Prostate gland (tissue), 2 donors: ENCODE measurements at regions of chr5 and their contacts with region 1.

Region 1: GRCh38 chr5:81194633-81195333 is 38.3 kb upstream of the CKMT2 start:
- DNase-seq: peak; percentile 68
- H3K4me3 ChIP-seq: no peak overlapping the region
- H3K27ac ChIP-seq: no peak overlapping the region
- H3K4me1 ChIP-seq: no peaks in the 10 kb centered on the region
- H3K27me3 ChIP-seq: no peaks in the 10 kb centered on the region
- CTCF ChIP-seq: peak; percentile 63 to 85 (median 76)
- POLR2A ChIP-seq: no peak

Region 2: DNA sequence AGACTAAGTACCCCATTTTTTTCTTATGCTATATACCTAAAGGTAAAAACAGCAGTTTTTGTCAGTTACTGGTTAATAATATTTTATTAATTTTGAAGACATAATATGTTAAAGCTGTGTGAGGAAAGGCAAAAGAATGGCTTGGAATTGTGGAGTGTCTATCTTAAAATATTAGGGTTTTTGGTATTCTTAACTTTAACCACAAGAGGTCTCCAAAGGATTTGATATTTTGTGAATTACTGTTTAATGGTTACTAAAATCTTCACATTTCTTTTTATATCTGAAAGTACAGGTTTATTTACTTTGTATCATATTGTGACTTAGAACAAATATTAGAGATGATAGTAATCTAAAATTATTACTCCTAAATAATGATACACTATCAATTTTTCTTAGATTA is 508.0 kb before region 1 on chr5:
- intact Hi-C with region 1: loop called (anchors 10 kb)
- DNase-seq: no peak
- H3K4me3 ChIP-seq: no peak overlapping the region
- H3K27ac ChIP-seq: no peak overlapping the region
- H3K4me1 ChIP-seq: no peaks in the 10 kb centered on the region
- H3K27me3 ChIP-seq: no peaks in the 10 kb centered on the region
- CTCF ChIP-seq: peak in 3 of 4 experiments; percentile 28 to 59 (median 52)
- POLR2A ChIP-seq: no peak

Region 3: DNA sequence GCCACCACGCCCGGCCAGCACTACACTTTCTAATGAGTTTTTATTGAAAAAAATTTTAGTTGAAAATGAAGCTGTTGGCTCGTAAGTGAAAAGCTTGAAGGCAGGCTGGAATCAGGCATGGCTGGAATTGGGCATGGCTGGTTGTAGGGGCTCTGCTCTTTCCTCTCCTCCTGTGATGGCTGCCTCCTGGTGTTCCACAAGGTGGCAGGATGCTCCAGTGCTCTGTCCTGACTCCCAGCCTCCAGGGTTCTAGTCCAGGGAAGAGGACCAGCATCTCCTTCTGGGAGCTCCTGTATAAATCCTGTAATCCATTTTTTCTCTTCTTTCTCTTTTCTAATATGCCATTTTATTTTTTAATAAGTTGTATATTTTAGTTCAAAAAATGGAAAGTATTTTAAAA is 482.8 kb before region 1 on chr5:
- intact Hi-C with region 1: loop called (anchors 10 kb)
- DNase-seq: no peak
- H3K4me3 ChIP-seq: no peak overlapping the region
- H3K27ac ChIP-seq: no peak overlapping the region
- H3K4me1 ChIP-seq: peaks cover 2% of the 10 kb centered on the region
- H3K27me3 ChIP-seq: no peaks in the 10 kb centered on the region
- CTCF ChIP-seq: peak in 2 of 4 experiments; percentile 22 to 27
- POLR2A ChIP-seq: no peak

Region 4: DNA sequence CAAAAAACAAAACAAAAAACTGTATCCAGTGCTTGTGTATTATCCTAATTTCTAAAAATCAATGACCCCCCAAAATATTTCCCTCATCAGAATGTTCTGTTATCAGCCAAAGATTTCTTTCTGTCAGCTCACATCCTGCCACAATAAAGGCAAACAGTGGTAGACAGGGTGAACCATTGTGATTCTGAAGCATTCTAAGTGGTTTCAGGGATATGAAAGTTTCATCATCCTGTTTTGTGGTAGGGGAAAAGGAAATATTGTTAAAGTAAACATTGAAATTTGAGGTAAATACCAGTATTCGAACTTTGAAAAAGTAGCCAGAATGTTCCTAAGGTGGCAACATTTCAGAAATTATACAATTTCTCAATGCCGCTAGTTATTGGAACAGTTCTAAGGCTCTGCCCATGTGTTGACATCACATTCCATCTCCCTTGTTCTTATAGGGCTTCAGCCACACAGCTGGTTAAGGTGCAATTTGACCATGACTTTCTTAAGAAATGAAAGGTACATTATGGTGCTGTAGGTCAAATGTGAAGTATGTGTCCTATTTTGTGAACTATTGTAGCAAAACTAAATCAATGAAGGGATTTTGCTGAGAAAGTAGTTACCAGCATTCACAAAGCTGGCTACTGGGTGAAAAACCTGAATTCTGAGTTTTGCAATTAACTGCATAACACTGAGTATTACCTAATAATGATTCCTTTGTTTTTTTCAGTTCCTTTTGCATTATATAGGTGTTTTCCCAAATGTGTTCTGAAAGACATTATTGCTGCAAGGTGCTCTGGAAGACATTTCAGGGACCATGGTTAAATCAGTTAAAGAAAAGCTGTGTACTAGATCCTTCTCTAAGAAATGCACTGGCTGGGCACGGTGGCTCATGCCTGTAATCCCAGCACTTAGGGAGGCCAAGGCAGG is 342.2 kb before region 1 on chr5:
- intact Hi-C with region 1: no loop called
- DNase-seq: no peak
- H3K4me3 ChIP-seq: no peak overlapping the region
- H3K27ac ChIP-seq: no peak overlapping the region
- H3K4me1 ChIP-seq: no peaks in the 10 kb centered on the region
- H3K27me3 ChIP-seq: no peaks in the 10 kb centered on the region
- CTCF ChIP-seq: no peak
- POLR2A ChIP-seq: no peak

Region 5: DNA sequence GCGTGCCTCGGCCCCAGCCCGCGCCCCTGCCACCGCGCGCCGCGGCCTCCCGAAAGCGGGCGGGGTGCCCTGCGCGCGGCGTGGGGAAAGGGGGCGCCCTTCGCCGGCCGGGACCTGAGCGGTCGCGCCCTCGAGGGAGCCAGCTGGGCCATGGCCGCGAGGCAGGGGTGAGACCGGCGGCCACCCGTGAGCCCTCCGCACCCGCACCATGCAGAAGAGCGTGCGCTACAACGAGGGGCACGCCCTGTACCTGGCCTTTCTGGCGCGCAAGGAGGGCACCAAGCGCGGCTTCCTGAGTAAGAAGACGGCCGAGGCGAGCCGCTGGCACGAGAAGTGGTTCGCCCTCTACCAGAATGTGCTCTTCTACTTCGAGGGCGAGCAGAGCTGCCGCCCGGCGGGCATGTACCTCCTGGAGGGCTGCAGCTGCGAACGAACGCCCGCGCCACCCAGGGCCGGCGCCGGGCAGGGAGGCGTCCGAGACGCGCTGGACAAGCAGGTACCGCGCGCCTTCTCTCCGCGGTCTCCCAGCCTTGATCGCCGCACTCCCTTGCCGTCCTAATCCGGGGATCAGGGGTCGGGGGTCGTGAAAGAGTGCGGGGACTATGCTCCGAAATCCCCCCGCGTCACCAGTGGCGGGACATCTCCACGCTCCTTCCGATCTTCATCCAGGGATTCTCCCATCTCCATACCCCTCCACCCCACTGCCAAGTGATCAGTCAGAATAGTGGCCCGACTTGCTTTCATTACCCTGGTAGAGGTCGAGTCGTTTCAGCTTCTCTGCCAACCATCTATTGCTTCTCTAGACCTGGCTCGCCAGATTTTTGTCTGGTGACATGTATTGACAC is 234.0 kb before region 1 on chr5:
- intact Hi-C with region 1: loop called (anchors 5 kb)
- DNase-seq: no peak
- H3K4me3 ChIP-seq: peak overlapping the region; percentile 46 to 47
- H3K27ac ChIP-seq: peak overlapping the region; percentile 76
- H3K4me1 ChIP-seq: no peaks in the 10 kb centered on the region
- H3K27me3 ChIP-seq: no peaks in the 10 kb centered on the region
- CTCF ChIP-seq: peak in 1 of 4 experiments; percentile 17
- POLR2A ChIP-seq: no peak

Region 6: DNA sequence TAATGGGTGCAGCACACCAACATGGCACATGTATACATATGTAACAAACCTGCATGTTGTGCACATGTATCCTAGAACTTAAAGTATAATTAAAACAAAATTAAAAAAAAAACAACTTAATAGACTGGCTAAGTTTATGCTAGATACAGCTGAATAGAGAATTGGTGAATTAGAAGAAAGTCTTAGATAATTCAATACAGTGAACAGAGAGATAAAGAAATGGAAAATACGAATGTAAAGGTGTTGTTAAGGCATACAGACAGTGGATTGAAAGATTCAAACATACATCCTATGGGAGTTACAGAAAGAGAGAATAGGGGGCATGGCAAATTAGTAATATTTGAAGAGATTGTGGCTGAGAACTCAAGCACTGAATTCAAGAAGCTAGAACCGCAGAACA is 159.3 kb before region 1 on chr5:
- intact Hi-C with region 1: no loop called
- DNase-seq: no peak
- H3K4me3 ChIP-seq: no peak overlapping the region
- H3K27ac ChIP-seq: no peak overlapping the region
- H3K4me1 ChIP-seq: no peaks in the 10 kb centered on the region
- H3K27me3 ChIP-seq: no peaks in the 10 kb centered on the region
- CTCF ChIP-seq: no peak
- POLR2A ChIP-seq: no peak